Gastrocnemius medialis (tissue), 4 donors: ENCODE measurements at regions of chr5 and their contacts with region 1.

Region 1: DNA sequence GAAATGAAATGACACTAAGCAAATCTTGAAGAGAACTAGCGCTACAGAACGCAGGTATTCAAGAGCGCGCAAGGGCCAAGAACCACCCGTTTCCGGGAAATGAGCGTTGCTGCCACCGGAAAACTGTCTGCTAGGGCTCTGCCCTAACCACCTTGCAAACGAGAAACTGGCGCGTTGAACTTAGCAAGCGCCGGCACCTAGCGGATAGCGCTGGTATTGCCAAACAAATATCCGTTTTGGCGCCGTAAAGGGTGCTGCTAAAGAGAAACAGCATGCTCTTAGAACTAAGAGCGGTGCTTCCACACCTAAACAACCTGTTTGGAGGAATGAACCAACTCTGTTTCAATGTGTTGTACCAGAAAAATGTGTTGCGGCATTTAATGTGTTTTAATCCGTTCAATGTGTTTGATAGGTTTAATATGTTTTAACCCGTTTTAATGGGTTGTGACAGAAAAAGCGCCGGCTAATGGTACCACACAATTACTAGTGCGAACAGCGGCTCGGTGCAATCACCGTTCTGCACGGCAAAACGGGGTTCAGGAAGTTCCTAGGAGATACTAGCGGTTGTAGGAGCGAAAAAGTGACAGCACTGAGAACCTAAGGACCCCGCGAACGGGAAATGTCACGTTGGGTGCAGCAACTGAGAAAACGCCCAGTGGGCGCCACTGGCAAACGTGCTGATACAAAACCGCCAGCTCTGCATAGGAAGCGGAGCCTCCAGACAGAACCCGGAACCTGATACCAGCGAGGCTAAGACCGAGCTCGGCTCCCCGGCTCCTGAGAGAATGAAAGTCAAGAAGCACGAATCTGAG is at the start of gene ANXA2R:
- DNase-seq: peak; percentile 85 to 93
- ATAC-seq: peak; percentile 49 to 62
- H3K4me3 ChIP-seq: peak within 1 kb of the TSS; percentile 69 to 93 (median 82)
- H3K27ac ChIP-seq: peak within 1 kb of the TSS; percentile 96 to 99 (median 97)
- H3K4me1 ChIP-seq: peaks cover 10 to 15% of the 10 kb centered on the region in 2 donors
- H3K27me3 ChIP-seq: no peaks in the 10 kb centered on the region
- CTCF ChIP-seq: peak; percentile 87 to 92 (median 91)
- POLR2A ChIP-seq: peak in 1 of 2 donors; percentile 4
- total RNA-seq, gene ANXA2R: 1.1 to 3.3 (median 1.4) TPM

Region 2: GRCh38 chr5:42811591-42812446 is 228.7 kb before region 1 on chr5 and contains the start of gene SELENOP:
- in situ Hi-C with region 1: loop called in 1 of 4 experiments (anchors 25 kb)
- intact Hi-C with region 1: loop called (anchors 2 kb)
- DNase-seq: peak; percentile 72 to 74
- ATAC-seq: peak; percentile 96 to 97
- H3K4me3 ChIP-seq: peak within 1 kb of the TSS; percentile 56 to 76 (median 64)
- H3K27ac ChIP-seq: peak within 1 kb of the TSS; percentile 81 to 91 (median 86)
- H3K4me1 ChIP-seq: peaks cover 27 to 30% of the 10 kb centered on the region in 2 donors
- H3K27me3 ChIP-seq: no peaks in the 10 kb centered on the region
- CTCF ChIP-seq: no peak
- POLR2A ChIP-seq: peak; percentile 90 to 95
- total RNA-seq, gene SELENOP: 231 to 290 (median 243) TPM

Region 3: DNA sequence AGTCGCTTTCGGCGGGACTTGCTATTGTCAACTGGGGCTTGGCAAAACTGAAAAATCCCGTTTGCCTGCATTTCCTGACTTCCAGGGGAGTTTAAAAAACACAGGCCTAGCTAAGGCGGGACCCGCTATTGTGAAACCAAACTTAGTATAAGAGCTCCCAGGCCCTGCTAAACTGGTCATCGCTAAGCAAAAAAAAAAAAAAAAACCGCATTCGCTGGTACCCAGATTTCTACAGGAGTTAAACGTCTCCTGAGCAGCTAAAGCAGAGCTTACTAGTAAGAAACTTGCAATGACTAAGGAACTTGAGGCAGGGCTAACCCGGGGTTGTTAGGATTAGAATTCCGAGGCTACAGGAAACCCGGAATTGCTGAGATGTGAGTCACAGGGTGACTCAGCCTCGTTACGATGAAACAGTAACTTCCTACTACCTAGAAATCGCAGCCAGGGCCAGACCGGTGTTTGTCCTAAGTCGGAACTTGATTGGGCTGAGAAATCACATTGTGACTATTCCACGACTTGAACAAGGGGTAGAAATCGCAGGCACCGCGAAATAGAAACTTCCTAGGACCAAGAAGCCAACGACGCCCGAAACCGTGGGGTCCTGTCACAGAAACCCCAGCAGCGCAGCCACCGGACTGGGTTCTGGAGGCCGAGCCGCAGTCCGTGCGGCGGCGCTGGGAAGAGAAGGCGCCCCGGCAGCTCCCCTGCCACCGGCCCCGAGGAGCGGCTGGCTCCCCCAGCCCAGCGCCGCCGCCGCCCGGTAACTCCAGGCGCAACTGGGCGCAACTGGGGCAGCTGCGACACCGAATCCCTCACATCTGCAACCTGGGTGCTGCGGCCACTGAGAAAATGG is 89.8 kb before region 1 on chr5:
- in situ Hi-C with region 1: no loop called
- intact Hi-C with region 1: loop called (anchors 1 kb)
- DNase-seq: peak; percentile 46 to 58
- ATAC-seq: peak; percentile 80 to 90
- H3K4me3 ChIP-seq: peak overlapping the region; percentile 60 to 74 (median 65)
- H3K27ac ChIP-seq: peak overlapping the region; percentile 80 to 84 (median 83)
- H3K4me1 ChIP-seq: peaks cover 22 to 33% of the 10 kb centered on the region in 2 donors
- H3K27me3 ChIP-seq: peaks cover 69 to 81% (median 69%) of the 10 kb centered on the region in 3 donors
- CTCF ChIP-seq: no peak
- POLR2A ChIP-seq: peak in 1 of 2 donors; percentile 44

Region 4: DNA sequence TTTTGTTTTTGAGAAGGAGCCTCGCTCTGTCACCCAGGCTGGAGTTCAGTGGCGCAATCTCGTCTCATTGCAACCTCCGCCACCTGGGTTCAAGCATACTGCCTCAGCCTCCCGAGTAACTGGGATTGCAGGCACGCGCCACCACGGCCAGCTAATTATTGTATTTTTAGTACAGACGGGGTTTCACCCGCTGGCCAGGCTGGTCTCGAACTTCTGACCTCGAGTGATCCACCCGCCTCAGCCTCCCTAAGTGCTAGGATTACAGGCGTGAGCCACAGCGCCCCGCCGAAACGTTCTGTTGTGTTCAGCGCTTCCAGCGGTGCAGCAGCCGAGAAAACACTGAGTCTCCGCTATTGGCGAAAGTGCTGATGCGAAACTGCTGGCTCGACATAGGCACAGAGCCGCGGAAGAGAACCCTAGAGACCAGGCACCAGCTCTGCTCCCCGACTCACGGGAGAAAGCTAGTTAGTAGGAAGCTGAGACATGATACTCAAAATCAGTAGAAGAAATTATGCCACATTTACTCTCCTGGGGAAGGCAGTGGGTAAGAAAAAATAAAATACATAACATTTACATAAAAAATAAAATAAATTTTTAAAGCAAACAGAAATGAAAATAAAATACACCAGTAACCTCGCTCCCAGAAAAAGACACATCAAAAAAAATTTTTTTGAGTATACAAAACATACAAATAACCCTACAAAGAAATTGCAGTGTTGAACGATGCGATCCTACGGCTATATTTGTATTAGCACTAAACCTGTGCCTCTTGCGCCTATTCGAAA is 31.9 kb before region 1 on chr5:
- in situ Hi-C with region 1: no loop called
- intact Hi-C with region 1: loop called (anchors 1 kb)
- DNase-seq: peak; percentile 72 to 85
- ATAC-seq: peak; percentile 79 to 81
- H3K4me3 ChIP-seq: peak overlapping the region; percentile 49 to 70 (median 68)
- H3K27ac ChIP-seq: peak overlapping the region; percentile 71 to 91 (median 87)
- H3K4me1 ChIP-seq: peaks cover 0 to 8% of the 10 kb centered on the region in 2 donors
- H3K27me3 ChIP-seq: peaks cover 0 to 33% (median 6%) of the 10 kb centered on the region in 3 donors
- CTCF ChIP-seq: peak in 1 of 5 experiments; percentile 8
- POLR2A ChIP-seq: peak; percentile 64 to 74

Region 5: GRCh38 chr5:43105369-43106289 is 65.1 kb after region 1 on chr5:
- in situ Hi-C with region 1: no loop called
- intact Hi-C with region 1: loop called (anchors 2 kb)
- DNase-seq: peak; percentile 78 to 86
- ATAC-seq: peak; percentile 97 to 98
- H3K4me3 ChIP-seq: peak overlapping the region; percentile 50 to 77 (median 61)
- H3K27ac ChIP-seq: peak overlapping the region; percentile 71 to 85 (median 79)
- H3K4me1 ChIP-seq: peaks cover 3 to 4% of the 10 kb centered on the region in 2 donors
- H3K27me3 ChIP-seq: no peaks in the 10 kb centered on the region
- CTCF ChIP-seq: peak; percentile 94 to 100 (median 97)
- POLR2A ChIP-seq: no peak